ENCODE measurements at regions of chr5 and their contacts with region 1.

Region 1: DNA sequence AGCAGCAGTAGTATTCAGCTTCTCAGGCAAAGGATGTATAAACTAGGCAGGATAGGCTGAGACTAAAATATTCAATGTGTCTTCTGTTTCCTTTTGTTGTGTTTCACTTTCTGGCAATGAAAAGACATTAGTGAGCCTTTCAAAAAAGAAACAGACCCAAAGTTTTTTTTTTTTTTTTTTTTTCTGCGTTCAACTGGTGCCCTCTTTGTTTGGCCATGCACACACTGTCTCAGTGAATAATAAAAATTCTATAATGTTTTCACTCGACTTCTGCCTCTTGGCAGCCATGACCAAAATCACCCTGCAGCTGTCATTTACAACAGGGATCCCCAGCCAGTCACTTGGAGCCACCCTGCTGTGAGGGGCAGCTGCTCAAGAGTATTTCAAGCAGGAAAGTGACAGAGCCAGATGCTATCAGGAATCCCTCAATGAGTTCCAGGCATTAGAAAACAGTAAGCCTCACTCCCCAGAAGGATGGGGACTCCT is 44.0 kb upstream of the MAN2A1 start:
- DNase-seq: no peak

Region 2: GRCh38 chr5:109656829-109657228 is 11.1 kb after region 1 on chr5:
- intact Hi-C with region 1: loop called in 1 of 2 experiments (anchors 1 kb)
- DNase-seq: peak; percentile 89

Measured in posterior vena cava (tissue), 2 donors.